Activated T-helper 2 cell treated with anti-CD3 and anti-CD28 coated beads, Interferon-gamma antibody, Interleukin-2, Interleukin-4, amounts not matched to agents 10 μg/mL and 5 μg/mL and 100 μg/mL, durations not matched to agents 14 hours and 24 hours and 36 hours (primary cell): ENCODE measurements at regions of chr13 and their contacts with region 1.

Region 1: GRCh38 chr13:41456768-41457588 is at the start of gene RGCC:
- DNase-seq: peak; percentile 83
- H3K4me3 Mint-ChIP-seq: peak within 1 kb of the TSS; percentile 95
- H3K27ac Mint-ChIP-seq: peak within 1 kb of the TSS; percentile 95
- H3K4me1 Mint-ChIP-seq: peaks cover 40% of the 10 kb centered on the region
- H3K27me3 Mint-ChIP-seq: peaks cover 25% of the 10 kb centered on the region
- total RNA-seq, gene RGCC: 76.5 and 79.3 TPM in 2 replicates

Region 2: GRCh38 chr13:41061075-41061913 is 395.7 kb before region 1 on chr13 and contains the start of gene WBP4:
- intact Hi-C with region 1: loop called (anchors 1 kb)
- DNase-seq: peak; percentile 85
- H3K4me3 Mint-ChIP-seq: peak within 1 kb of the TSS; percentile 95
- H3K27ac Mint-ChIP-seq: peak within 1 kb of the TSS; percentile 100
- H3K4me1 Mint-ChIP-seq: peaks cover 43% of the 10 kb centered on the region
- H3K27me3 Mint-ChIP-seq: no peaks in the 10 kb centered on the region
- total RNA-seq, gene WBP4: 13.3 and 13.8 TPM in 2 replicates

Region 3: GRCh38 chr13:41306271-41307145 is 150.5 kb before region 1 on chr13:
- intact Hi-C with region 1: no loop called
- DNase-seq: no peak
- H3K4me3 Mint-ChIP-seq: no peak overlapping the region
- H3K27ac Mint-ChIP-seq: no peak overlapping the region
- H3K4me1 Mint-ChIP-seq: peaks cover 5% of the 10 kb centered on the region
- H3K27me3 Mint-ChIP-seq: peaks cover 7% of the 10 kb centered on the region

Region 4: GRCh38 chr13:41402681-41403511 is 54.1 kb before region 1 on chr13:
- intact Hi-C with region 1: loop called (anchors 2 kb)
- DNase-seq: no peak
- H3K4me3 Mint-ChIP-seq: no peak overlapping the region
- H3K27ac Mint-ChIP-seq: no peak overlapping the region
- H3K4me1 Mint-ChIP-seq: no peaks in the 10 kb centered on the region
- H3K27me3 Mint-ChIP-seq: peaks cover 11% of the 10 kb centered on the region

Region 5: DNA sequence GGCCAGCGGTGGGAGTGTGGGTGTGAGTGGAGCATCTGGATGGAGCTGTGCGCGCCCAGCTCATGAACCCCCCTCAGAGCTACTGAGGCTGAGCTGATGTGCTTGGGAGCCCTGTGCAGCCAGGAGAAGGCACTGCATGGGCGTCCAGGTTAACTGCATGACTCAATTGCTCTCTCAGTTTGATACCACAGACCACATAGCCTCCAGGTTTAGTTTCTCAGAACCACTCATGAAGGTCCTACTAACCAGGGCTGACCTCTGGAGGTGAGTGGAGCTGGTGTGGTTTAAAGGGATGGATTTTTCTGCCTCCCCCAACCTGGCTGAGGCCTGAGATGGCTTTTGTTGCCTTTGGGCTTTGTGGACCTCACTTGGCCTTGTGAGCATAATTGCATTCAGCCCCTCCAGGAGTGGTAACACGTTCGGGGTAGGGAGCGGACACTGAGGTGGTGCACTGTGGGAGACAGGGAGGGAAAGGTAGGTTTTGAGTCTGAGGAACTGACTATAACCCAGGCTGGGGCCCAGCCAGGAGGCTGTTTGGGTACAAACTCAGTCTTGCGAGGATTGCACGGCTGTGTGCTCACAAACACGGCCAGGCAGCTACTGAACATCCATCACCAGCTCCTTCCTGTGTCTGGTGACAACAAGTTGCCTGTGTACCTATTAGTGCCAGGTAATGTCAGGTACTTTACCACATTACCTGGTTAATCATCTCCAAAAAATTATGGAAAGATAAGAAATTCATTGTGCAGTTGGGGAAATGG is 97.8 kb after region 1 on chr13:
- intact Hi-C with region 1: loop called (anchors 1 kb)
- DNase-seq: no peak
- H3K4me3 Mint-ChIP-seq: no peak overlapping the region
- H3K27ac Mint-ChIP-seq: no peak overlapping the region
- H3K4me1 Mint-ChIP-seq: peaks cover 9% of the 10 kb centered on the region
- H3K27me3 Mint-ChIP-seq: no peaks in the 10 kb centered on the region

Region 6: GRCh38 chr13:41916173-41916954 is 459.4 kb after region 1 on chr13:
- intact Hi-C with region 1: loop called (anchors 2 kb)
- DNase-seq: no peak
- H3K4me3 Mint-ChIP-seq: peak overlapping the region; percentile 71
- H3K27ac Mint-ChIP-seq: peak overlapping the region; percentile 93
- H3K4me1 Mint-ChIP-seq: peaks cover 53% of the 10 kb centered on the region
- H3K27me3 Mint-ChIP-seq: no peaks in the 10 kb centered on the region

Region 7: GRCh38 chr13:42271337-42272114 is 814.5 kb after region 1 on chr13:
- intact Hi-C with region 1: loop called (anchors 5 kb)
- DNase-seq: peak; percentile 95
- H3K4me3 Mint-ChIP-seq: peak overlapping the region; percentile 78
- H3K27ac Mint-ChIP-seq: peak overlapping the region; percentile 91
- H3K4me1 Mint-ChIP-seq: peaks cover 44% of the 10 kb centered on the region
- H3K27me3 Mint-ChIP-seq: no peaks in the 10 kb centered on the region

Region 8: DNA sequence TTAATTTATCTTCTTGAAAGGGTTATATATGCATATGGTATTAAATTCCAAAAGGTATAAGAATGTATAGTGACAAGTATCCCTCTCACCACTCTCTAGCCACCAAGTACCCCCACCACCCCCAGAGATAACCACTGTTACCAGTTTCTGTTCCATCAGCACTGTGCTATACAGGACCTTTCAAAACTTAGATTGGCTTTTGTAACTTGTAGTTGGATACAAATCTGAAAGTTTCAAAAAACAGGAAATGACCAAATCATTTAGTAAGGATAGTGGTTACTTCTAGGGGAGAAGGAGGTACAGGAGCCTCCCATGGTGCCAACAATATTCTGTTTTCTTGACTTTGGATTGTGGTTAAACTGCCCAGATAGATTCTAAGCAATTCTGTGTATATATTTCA is 871.7 kb after region 1 on chr13:
- intact Hi-C with region 1: no loop called
- DNase-seq: no peak
- H3K4me3 Mint-ChIP-seq: no peak overlapping the region
- H3K27ac Mint-ChIP-seq: peak overlapping the region; percentile 79
- H3K4me1 Mint-ChIP-seq: peaks cover 40% of the 10 kb centered on the region
- H3K27me3 Mint-ChIP-seq: no peaks in the 10 kb centered on the region